SK-N-SH (cell line): ENCODE measurements at regions of chr16 and their contacts with region 1.

Region 1: DNA sequence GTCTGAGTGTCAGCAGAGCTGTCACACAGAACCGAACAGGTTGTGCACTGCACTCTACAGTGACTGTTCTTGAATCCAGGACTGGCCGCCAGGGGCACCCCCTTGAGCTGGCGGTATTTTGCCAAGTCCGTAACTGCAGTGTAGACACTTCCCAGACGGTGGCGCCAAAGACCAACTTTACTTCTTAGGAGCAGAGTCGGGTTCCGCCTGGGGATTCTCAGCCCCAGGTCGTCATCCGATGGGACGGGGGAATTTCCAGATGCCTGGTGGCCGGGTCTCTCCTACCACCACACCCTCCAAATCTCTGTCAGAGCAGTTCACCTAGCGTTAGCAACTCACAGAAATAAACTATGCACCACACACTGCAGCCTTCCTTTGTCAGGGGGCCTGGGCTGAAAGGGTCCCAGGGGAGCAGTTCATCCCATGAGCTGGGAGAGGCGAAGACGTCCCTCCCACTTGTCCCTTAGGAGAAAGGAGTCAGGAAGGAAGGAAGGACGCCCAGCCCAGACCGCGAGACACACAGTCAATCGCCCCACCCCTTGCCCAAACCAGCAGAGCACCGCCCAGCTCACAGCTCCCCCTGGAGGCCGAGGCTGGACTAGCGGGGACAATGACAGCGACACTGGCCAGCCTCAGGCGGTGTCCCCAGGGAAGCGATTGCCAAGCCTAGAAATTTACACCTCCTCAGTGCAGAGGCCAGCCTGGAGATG is 7.4 kb upstream of the RIPOR1 start:
- DNase-seq: peak; percentile 89
- H3K4me3 ChIP-seq: peak overlapping the region; percentile 52 to 73
- H3K27ac ChIP-seq: peak overlapping the region; percentile 86 to 91
- H3K4me1 ChIP-seq: peaks cover 3 to 5% of the 10 kb centered on the region in 2 experiments; a peak in 2 of 4 replicates
- H3K27me3 ChIP-seq: no peaks in the 10 kb centered on the region
- CTCF ChIP-seq: peak; percentile 84
- EP300 ChIP-seq: peak in 1 of 2 experiments; percentile 2; a peak in 1 of 4 replicates
- RAD21 ChIP-seq: peak; percentile 94

Region 2: DNA sequence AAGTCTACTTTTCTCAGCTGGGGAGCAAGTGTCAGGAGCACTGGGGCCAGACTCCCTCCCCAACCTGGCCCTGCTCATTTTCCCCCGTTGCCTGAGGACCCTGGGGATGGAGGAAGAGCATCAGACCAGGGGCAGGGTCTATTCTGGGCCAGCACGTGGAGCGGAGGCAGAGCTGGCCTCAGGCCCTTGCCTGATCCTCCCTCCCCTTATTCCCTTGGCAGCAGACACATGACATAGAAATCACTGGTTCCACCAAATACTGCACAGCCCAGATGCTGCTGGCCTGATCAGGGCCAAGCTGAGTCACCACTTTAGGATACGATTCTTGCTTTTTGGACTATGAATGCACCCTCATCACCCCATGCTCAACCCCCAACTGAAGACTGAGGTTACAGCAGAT is 22.1 kb before region 1 on chr16:
- CTCF ChIA-PET with region 1: interaction called, 104 read pairs
- POLR2A ChIA-PET with region 1: interaction called, 3 read pairs
- DNase-seq: no peak
- H3K4me3 ChIP-seq: no peak overlapping the region
- H3K27ac ChIP-seq: no peak overlapping the region
- H3K4me1 ChIP-seq: no peaks in the 10 kb centered on the region
- H3K27me3 ChIP-seq: no peaks in the 10 kb centered on the region
- CTCF ChIP-seq: no peak
- EP300 ChIP-seq: no peak
- RAD21 ChIP-seq: no peak

Region 3: DNA sequence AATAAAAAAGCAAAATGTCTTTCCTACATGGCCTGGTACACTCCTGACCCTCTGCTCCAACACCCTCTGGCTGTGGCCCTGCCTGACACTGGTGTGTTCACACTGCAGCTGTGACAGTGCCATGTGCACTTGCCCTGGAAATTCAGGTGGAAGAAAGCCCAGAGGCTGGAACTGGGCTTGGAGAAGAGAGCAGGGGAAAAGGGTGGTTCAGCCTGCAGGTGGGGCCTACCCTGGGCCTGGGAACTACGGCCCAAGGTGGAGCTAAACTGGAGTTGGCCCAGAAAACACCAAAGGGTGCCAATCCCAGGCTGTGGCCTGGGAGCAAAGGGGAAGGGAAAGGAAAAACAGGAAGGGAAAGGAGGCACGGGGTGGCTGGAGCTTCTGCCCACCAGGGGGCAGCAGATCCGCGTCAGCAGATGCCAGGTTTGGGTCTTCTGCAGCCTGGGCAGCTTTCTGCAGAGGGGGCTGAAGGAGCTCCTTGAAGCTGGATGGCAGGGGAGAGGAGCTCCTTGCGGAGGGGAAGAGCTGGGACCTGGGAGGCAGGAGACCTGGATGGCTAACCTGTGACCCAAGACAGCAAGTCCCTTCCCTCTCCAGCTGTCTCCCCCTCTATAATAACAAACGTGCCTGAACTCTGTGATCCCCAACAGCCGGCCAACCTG is 25.6 kb after region 1 on chr16:
- CTCF ChIA-PET with region 1: interaction called, 35 read pairs
- POLR2A ChIA-PET with region 1: no interaction called
- DNase-seq: peak; percentile 91
- H3K4me3 ChIP-seq: peak overlapping the region in 1 of 2 experiments; percentile 27; a peak in 1 of 4 replicates
- H3K27ac ChIP-seq: no peak overlapping the region; a peak in 1 of 4 replicates
- H3K4me1 ChIP-seq: no peaks in the 10 kb centered on the region
- H3K27me3 ChIP-seq: no peaks in the 10 kb centered on the region
- CTCF ChIP-seq: peak; percentile 85
- EP300 ChIP-seq: no peak
- RAD21 ChIP-seq: peak; percentile 84

Region 4: GRCh38 chr16:67613808-67614207 is 92.6 kb after region 1 on chr16:
- CTCF ChIA-PET with region 1: interaction called, 13 read pairs
- POLR2A ChIA-PET with region 1: no interaction called
- DNase-seq: no peak
- H3K4me3 ChIP-seq: no peak overlapping the region
- H3K27ac ChIP-seq: no peak overlapping the region
- H3K4me1 ChIP-seq: no peaks in the 10 kb centered on the region
- H3K27me3 ChIP-seq: no peaks in the 10 kb centered on the region
- CTCF ChIP-seq: peak; percentile 25; the same call in 1 of the 2 replicates
- EP300 ChIP-seq: no peak
- RAD21 ChIP-seq: no peak

Region 5: GRCh38 chr16:67653128-67653786 is 132.0 kb after region 1 on chr16:
- CTCF ChIA-PET with region 1: interaction called, 246 read pairs
- POLR2A ChIA-PET with region 1: no interaction called
- DNase-seq: peak; percentile 89
- H3K4me3 ChIP-seq: peak overlapping the region; percentile 64 to 82
- H3K27ac ChIP-seq: peak overlapping the region in 1 of 2 experiments; percentile 64; a peak in 1 of 4 replicates
- H3K4me1 ChIP-seq: peaks cover 0 to 10% of the 10 kb centered on the region in 2 experiments; a peak in 1 of 4 replicates
- H3K27me3 ChIP-seq: no peaks in the 10 kb centered on the region
- CTCF ChIP-seq: peak; percentile 42; the same call in 1 of the 2 replicates
- EP300 ChIP-seq: no peak
- RAD21 ChIP-seq: no peak